CD4-positive, alpha-beta memory T cell (primary cell): ENCODE measurements at regions of chr6 and their contacts with region 1.

Region 1: DNA sequence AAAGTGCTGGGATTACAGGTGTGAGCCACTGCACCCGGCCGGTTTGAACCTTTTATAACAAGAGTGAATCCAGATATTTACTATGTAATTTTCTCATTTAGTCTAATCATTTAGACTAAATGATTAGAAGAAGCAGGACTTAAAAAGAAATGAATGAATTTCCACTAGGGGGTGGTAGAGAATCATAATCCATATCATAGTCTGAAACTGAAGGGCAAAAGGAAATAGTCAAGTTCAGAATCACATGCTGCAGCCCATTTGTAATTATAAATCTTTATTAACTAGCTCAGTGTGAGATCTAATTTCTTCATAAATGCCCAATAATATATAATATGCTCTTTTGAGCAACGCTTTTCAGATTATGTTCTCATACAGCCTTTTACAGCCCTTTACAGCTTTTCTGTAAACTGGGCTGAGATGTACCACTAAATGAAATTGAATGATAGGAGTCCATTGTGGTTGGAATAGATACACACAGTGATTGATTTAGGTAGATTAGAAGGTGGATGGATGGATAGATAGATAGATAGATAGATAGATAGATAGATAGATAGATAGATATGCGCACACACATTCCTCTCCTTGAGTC is 31.8 kb downstream of the PSMB9 start:
- DNase-seq: peak in 4 of 5 donors; percentile 64 to 75 (median 69)
- H3K4me3 ChIP-seq: no peak overlapping the region
- H3K4me3 Mint-ChIP-seq: no peak overlapping the region
- H3K27ac ChIP-seq: no peak overlapping the region
- H3K27ac Mint-ChIP-seq: no peak overlapping the region
- H3K4me1 ChIP-seq: no peaks in the 10 kb centered on the region
- H3K4me1 Mint-ChIP-seq: no peaks in the 10 kb centered on the region
- H3K27me3 ChIP-seq: no peaks in the 10 kb centered on the region
- H3K27me3 Mint-ChIP-seq: no peaks in the 10 kb centered on the region

Region 2: GRCh38 chr6:32785781-32786533 is 99.8 kb before region 1 on chr6:
- CTCF ChIA-PET with region 1: no interaction called
- POLR2A ChIA-PET with region 1: no interaction called
- intact Hi-C with region 1: no loop called
- DNase-seq: peak in 4 of 5 donors; percentile 34 to 47 (median 42)
- H3K4me3 ChIP-seq: no peak overlapping the region
- H3K4me3 Mint-ChIP-seq: no peak overlapping the region
- H3K27ac ChIP-seq: no peak overlapping the region
- H3K27ac Mint-ChIP-seq: peak overlapping the region in 1 of 7 donors; percentile 71
- H3K4me1 ChIP-seq: no peaks in the 10 kb centered on the region
- H3K4me1 Mint-ChIP-seq: no peaks in the 10 kb centered on the region
- H3K27me3 ChIP-seq: no peaks in the 10 kb centered on the region
- H3K27me3 Mint-ChIP-seq: peaks cover 25 to 26% of the 10 kb centered on the region in 2 donors

Region 3: DNA sequence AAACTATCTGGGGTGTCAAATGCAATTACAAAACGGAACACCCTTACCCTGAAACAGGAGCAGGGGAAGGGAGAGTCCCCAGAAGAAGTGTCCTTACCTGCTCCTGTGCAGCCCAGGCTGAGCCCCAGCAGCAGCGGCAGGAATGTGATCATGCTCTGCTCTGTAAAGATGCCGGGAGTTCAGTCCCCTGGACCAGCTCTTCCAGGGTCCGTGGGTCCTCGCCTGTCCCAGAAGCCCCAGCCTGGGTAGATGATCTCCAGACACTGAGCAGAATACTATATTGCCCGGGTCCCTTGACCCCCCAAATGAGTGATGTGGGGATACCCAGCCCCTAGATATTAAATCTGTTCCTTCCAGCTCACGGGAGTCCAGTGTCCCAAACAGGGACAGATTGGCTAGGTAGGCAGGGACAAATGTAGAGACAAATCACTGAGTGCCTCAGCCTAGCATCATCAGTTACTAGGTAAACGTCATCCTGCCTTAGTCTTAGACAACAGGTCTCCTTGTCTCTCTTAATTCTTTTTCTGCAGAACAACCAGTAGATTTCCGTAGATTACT is 54.9 kb after region 1 on chr6 and contains the start of gene HLA-DMB:
- CTCF ChIA-PET with region 1: interaction called, 13 read pairs
- POLR2A ChIA-PET with region 1: no interaction called
- intact Hi-C with region 1: no loop called
- DNase-seq: peak; percentile 68 to 82 (median 70)
- H3K4me3 ChIP-seq: peak within 1 kb of the TSS; percentile 57 to 73
- H3K4me3 Mint-ChIP-seq: peak within 1 kb of the TSS; percentile 89 to 97 (median 92)
- H3K27ac ChIP-seq: peak within 1 kb of the TSS; percentile 68
- H3K27ac Mint-ChIP-seq: peak within 1 kb of the TSS; percentile 90 to 99 (median 94)
- H3K4me1 ChIP-seq: peaks cover 57% of the 10 kb centered on the region
- H3K4me1 Mint-ChIP-seq: peaks cover 46 to 60% (median 53%) of the 10 kb centered on the region in 4 donors
- H3K27me3 ChIP-seq: no peaks in the 10 kb centered on the region
- H3K27me3 Mint-ChIP-seq: no peaks in the 10 kb centered on the region
- total RNA-seq, gene HLA-DMB: 7.9 to 8.1 TPM

Region 4: GRCh38 chr6:32947552-32948465 is 62.0 kb after region 1 on chr6:
- CTCF ChIA-PET with region 1: interaction called, 59 read pairs
- POLR2A ChIA-PET with region 1: interaction called, 4 read pairs
- intact Hi-C with region 1: loop called (anchors 1 kb)
- DNase-seq: peak in 4 of 5 donors; percentile 34 to 49 (median 44)
- H3K4me3 ChIP-seq: no peak overlapping the region
- H3K4me3 Mint-ChIP-seq: no peak overlapping the region
- H3K27ac ChIP-seq: no peak overlapping the region
- H3K27ac Mint-ChIP-seq: peak overlapping the region in 5 of 7 donors; percentile 7 to 38 (median 25)
- H3K4me1 ChIP-seq: peaks cover 37% of the 10 kb centered on the region
- H3K4me1 Mint-ChIP-seq: peaks cover 31 to 58% (median 38%) of the 10 kb centered on the region in 4 donors
- H3K27me3 ChIP-seq: no peaks in the 10 kb centered on the region
- H3K27me3 Mint-ChIP-seq: no peaks in the 10 kb centered on the region

Region 5: GRCh38 chr6:32952817-32953739 is 67.3 kb after region 1 on chr6 and contains the start of gene HLA-DMA:
- CTCF ChIA-PET with region 1: interaction called, 59 read pairs
- POLR2A ChIA-PET with region 1: interaction called, 4 read pairs
- intact Hi-C with region 1: loop called (anchors 1 kb)
- DNase-seq: peak; percentile 76 to 90 (median 85)
- H3K4me3 ChIP-seq: peak within 1 kb of the TSS; percentile 7 to 19
- H3K4me3 Mint-ChIP-seq: peak within 1 kb of the TSS; percentile 18 to 80 (median 68)
- H3K27ac ChIP-seq: peak within 1 kb of the TSS; percentile 31
- H3K27ac Mint-ChIP-seq: peak within 1 kb of the TSS; percentile 49 to 89 (median 82)
- H3K4me1 ChIP-seq: peaks cover 27% of the 10 kb centered on the region
- H3K4me1 Mint-ChIP-seq: peaks cover 24 to 44% (median 34%) of the 10 kb centered on the region in 4 donors
- H3K27me3 ChIP-seq: no peaks in the 10 kb centered on the region
- H3K27me3 Mint-ChIP-seq: no peaks in the 10 kb centered on the region
- total RNA-seq, gene HLA-DMA: 8.5 to 10.2 TPM

Region 6: GRCh38 chr6:33075568-33076405 is 190.0 kb after region 1 on chr6 and contains the start of gene HLA-DPB1:
- CTCF ChIA-PET with region 1: no interaction called
- POLR2A ChIA-PET with region 1: no interaction called
- intact Hi-C with region 1: no loop called
- DNase-seq: peak; percentile 56 to 75 (median 64)
- H3K4me3 ChIP-seq: peak within 1 kb of the TSS; percentile 39 to 79
- H3K4me3 Mint-ChIP-seq: peak within 1 kb of the TSS; percentile 70 to 92 (median 87)
- H3K27ac ChIP-seq: peak within 1 kb of the TSS; percentile 76
- H3K27ac Mint-ChIP-seq: peak within 1 kb of the TSS; percentile 34 to 93 (median 87)
- H3K4me1 ChIP-seq: peaks cover 49% of the 10 kb centered on the region
- H3K4me1 Mint-ChIP-seq: peaks cover 28 to 57% (median 38%) of the 10 kb centered on the region in 4 donors
- H3K27me3 ChIP-seq: no peaks in the 10 kb centered on the region
- H3K27me3 Mint-ChIP-seq: peaks cover 2 to 3% of the 10 kb centered on the region in 2 donors
- total RNA-seq, gene HLA-DPB1: 14.5 to 17.2 TPM